CD4-positive, alpha-beta T cell (primary cell): ENCODE measurements at regions of chr7 and their contacts with region 1.

Region 1: DNA sequence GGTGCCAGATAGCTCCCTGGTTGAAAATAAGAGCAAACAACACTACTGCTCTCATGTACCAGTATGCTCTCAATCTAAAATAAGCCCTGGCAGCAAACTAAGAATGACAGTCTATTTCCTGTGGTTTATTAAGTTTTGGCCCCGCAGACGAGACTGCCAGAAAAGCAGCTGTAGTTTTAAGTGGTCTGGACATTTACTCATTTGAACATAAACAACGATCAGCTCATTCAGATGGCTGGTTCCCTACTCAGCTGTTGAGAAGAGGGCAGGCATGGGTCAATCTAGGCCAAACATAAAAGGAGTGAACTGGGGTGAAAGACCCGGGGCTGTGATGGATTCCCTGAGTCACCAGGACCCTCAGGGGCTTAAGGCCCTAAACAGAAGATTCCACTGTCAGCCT is 4.5 kb downstream of the TRIL start:
- DNase-seq: no peak
- ATAC-seq: no peak
- H3K4me3 ChIP-seq: no peak overlapping the region
- H3K4me3 Mint-ChIP-seq: no peak overlapping the region
- H3K27ac ChIP-seq: no peak overlapping the region
- H3K27ac Mint-ChIP-seq: no peak overlapping the region
- H3K4me1 ChIP-seq: peaks cover 26% of the 10 kb centered on the region
- H3K4me1 Mint-ChIP-seq: peaks cover 9% of the 10 kb centered on the region
- H3K27me3 ChIP-seq: peaks cover 30 to 38% of the 10 kb centered on the region in 2 experiments
- H3K27me3 Mint-ChIP-seq: peaks cover 67% of the 10 kb centered on the region
- CTCF ChIP-seq: no peak

Region 2: DNA sequence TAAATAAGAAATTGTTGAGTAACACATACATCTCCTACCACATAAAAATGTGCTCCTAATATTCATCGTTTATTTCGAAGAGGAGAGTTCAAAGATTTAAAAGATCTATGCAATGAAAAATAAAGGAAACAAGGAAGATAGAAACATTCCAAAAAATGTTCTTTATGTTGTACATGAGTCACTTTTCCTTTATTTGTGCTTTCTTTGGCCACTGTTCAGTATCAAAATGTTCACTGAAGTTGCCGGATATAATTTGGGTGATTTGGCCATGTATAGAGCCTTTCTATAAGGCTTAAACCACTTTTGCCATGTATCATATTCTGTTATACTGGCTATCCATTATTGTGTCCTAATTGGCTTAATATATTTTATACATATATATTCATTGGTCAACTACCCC is 547.1 kb after region 1 on chr7:
- CTCF ChIA-PET with region 1: no interaction called
- POLR2A ChIA-PET with region 1: no interaction called
- intact Hi-C with region 1: loop called in 1 of 2 experiments (anchors 5 kb)
- DNase-seq: no peak
- ATAC-seq: no peak
- H3K4me3 ChIP-seq: no peak overlapping the region
- H3K4me3 Mint-ChIP-seq: no peak overlapping the region
- H3K27ac ChIP-seq: no peak overlapping the region
- H3K27ac Mint-ChIP-seq: no peak overlapping the region
- H3K4me1 ChIP-seq: no peaks in the 10 kb centered on the region
- H3K4me1 Mint-ChIP-seq: no peaks in the 10 kb centered on the region
- H3K27me3 ChIP-seq: no peaks in the 10 kb centered on the region
- H3K27me3 Mint-ChIP-seq: no peaks in the 10 kb centered on the region
- CTCF ChIP-seq: no peak